ENCODE measurements at regions of chr3 and their contacts with region 1.

Region 1: DNA sequence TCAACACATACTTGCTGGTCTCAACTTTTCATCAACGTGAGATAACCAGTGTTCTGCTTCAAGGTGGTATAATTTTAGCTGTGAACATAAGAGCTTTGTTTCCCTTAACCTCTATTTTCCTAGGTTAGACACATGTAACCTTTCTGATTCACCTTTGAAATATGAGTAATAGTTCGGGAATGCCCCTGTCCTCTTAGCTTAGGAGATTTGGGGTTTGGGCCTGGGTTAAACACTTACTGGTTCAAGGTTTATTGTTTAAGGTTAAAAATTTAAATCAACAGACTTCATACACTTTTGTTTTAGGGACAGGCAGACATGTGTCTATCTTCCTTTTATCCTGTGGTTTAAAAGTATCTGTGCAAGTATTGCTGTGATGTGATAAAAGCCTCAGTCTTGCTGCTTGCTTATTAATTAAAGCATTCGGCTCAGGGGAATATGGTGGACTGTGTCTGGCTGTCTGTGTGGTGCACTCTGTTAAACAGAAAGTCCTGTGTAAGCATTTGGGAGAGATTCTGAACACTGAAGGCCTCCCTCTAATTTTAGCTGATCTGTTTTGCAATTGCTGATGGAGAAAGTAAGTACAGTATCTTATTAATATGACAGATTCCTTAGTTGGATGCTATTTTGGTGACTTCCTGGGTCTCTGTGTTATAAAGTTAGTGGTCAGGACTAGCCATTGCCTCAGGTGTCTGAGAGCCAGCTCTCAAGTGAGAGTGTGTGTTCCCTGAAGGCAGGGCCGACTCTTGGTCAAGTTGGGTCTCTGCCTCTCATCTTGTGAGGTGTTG is 81.8 kb downstream of the USP13 start:
- DNase-seq: no peak
- H3K4me3 ChIP-seq: no peak overlapping the region
- H3K27ac ChIP-seq: no peak overlapping the region
- H3K4me1 ChIP-seq: peaks cover 9% of the 10 kb centered on the region
- H3K27me3 ChIP-seq: no peaks in the 10 kb centered on the region
- CTCF ChIP-seq: no peak

Region 2: GRCh38 chr3:179660872-179661271 is 73.8 kb before region 1 on chr3:
- CTCF ChIA-PET with region 1: no interaction called
- dilution Hi-C with region 1: loop called (anchors 5 kb)
- in situ Hi-C with region 1: no loop called
- intact Hi-C with region 1: no loop called
- DNase-seq: peak; percentile 24
- H3K4me3 ChIP-seq: no peak overlapping the region
- H3K27ac ChIP-seq: no peak overlapping the region
- H3K4me1 ChIP-seq: no peaks in the 10 kb centered on the region
- H3K27me3 ChIP-seq: no peaks in the 10 kb centered on the region
- CTCF ChIP-seq: no peak

Region 3: GRCh38 chr3:179688850-179689249 is 45.8 kb before region 1 on chr3:
- CTCF ChIA-PET with region 1: no interaction called
- dilution Hi-C with region 1: no loop called
- in situ Hi-C with region 1: no loop called
- intact Hi-C with region 1: no loop called
- DNase-seq: peak; percentile 19
- H3K4me3 ChIP-seq: no peak overlapping the region
- H3K27ac ChIP-seq: no peak overlapping the region
- H3K4me1 ChIP-seq: no peaks in the 10 kb centered on the region
- H3K27me3 ChIP-seq: no peaks in the 10 kb centered on the region
- CTCF ChIP-seq: no peak

Measured in mammary epithelial cell (primary cell).